CD8-positive, alpha-beta T cell (primary cell): ENCODE measurements at regions of chr17 and their contacts with region 1.

Region 1: GRCh38 chr17:14926526-14927122 is 338.5 kb downstream of the PMP22 start:
- DNase-seq: peak; percentile 13 to 75 (median 56)
- ATAC-seq: no peak
- H3K4me3 ChIP-seq: no peak overlapping the region
- H3K4me3 Mint-ChIP-seq: no peak overlapping the region
- H3K27ac ChIP-seq: no peak overlapping the region
- H3K27ac Mint-ChIP-seq: no peak overlapping the region
- H3K4me1 ChIP-seq: no peaks in the 10 kb centered on the region
- H3K4me1 Mint-ChIP-seq: no peaks in the 10 kb centered on the region
- H3K27me3 ChIP-seq: peaks cover 0 to 3% of the 10 kb centered on the region in 2 experiments
- H3K27me3 Mint-ChIP-seq: peaks cover 14% of the 10 kb centered on the region
- CTCF ChIP-seq: peak; percentile 91

Region 2: GRCh38 chr17:13024526-13025257 is 1901.9 kb before region 1 on chr17:
- CTCF ChIA-PET with region 1: interaction called, 10 read pairs
- POLR2A ChIA-PET with region 1: no interaction called
- intact Hi-C with region 1: loop called in 1 of 2 experiments (anchors 5 kb)
- DNase-seq: peak; percentile 26 to 77 (median 63)
- ATAC-seq: peak; percentile 99
- H3K4me3 ChIP-seq: no peak overlapping the region
- H3K4me3 Mint-ChIP-seq: peak overlapping the region; percentile 27
- H3K27ac ChIP-seq: no peak overlapping the region
- H3K27ac Mint-ChIP-seq: no peak overlapping the region
- H3K4me1 ChIP-seq: peaks cover 7% of the 10 kb centered on the region
- H3K4me1 Mint-ChIP-seq: peaks cover 4% of the 10 kb centered on the region
- H3K27me3 ChIP-seq: no peaks in the 10 kb centered on the region
- H3K27me3 Mint-ChIP-seq: peaks cover 15% of the 10 kb centered on the region
- CTCF ChIP-seq: peak; percentile 97

Region 3: DNA sequence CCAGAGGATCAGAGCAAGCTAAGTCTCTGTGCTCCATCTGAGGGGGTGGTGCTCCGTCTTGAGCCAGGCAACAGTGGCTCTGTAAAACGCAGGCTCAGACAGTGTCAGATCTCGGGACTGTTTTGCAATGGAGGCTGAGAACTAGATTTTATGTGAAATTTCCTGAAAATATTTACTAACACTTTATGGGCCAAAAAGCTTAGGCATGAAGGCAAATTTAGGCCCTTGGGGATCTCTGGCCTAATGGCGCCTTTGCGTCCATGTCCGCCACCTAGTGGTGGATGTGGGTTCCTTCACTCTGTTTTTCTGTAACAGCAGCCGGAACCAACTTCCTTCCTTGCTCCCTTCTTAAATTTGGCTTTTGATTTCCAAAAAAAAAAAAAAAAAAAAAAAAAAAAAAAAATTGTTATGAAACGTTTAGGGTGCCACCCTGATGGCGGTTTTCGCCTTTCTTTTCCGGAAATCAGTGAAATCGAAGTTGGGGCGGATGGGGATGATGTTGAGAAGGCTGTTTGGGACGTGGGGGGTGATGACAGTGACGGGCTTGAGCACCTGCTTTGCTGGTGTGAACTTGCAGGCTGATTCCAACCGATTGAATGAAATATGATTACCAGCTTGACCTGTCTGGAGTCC is 1894.8 kb before region 1 on chr17:
- CTCF ChIA-PET with region 1: interaction called, 10 read pairs
- POLR2A ChIA-PET with region 1: no interaction called
- intact Hi-C with region 1: loop called (anchors 2 to 5 kb)
- DNase-seq: peak; percentile 10 to 72 (median 41)
- ATAC-seq: peak; percentile 81
- H3K4me3 ChIP-seq: no peak overlapping the region
- H3K4me3 Mint-ChIP-seq: no peak overlapping the region
- H3K27ac ChIP-seq: no peak overlapping the region
- H3K27ac Mint-ChIP-seq: peak overlapping the region; percentile 75
- H3K4me1 ChIP-seq: peaks cover 3% of the 10 kb centered on the region
- H3K4me1 Mint-ChIP-seq: peaks cover 16% of the 10 kb centered on the region
- H3K27me3 ChIP-seq: no peaks in the 10 kb centered on the region
- H3K27me3 Mint-ChIP-seq: peaks cover 8% of the 10 kb centered on the region
- CTCF ChIP-seq: peak; percentile 72

Region 4: GRCh38 chr17:13337864-13338371 is 1588.7 kb before region 1 on chr17:
- CTCF ChIA-PET with region 1: interaction called, 8 read pairs
- POLR2A ChIA-PET with region 1: no interaction called
- intact Hi-C with region 1: loop called in 1 of 2 experiments (anchors 1 kb)
- DNase-seq: peak in 2 of 9 experiments; percentile 21 to 40
- ATAC-seq: no peak
- H3K4me3 ChIP-seq: no peak overlapping the region
- H3K4me3 Mint-ChIP-seq: peak overlapping the region; percentile 37
- H3K27ac ChIP-seq: no peak overlapping the region
- H3K27ac Mint-ChIP-seq: no peak overlapping the region
- H3K4me1 ChIP-seq: no peaks in the 10 kb centered on the region
- H3K4me1 Mint-ChIP-seq: peaks cover 4% of the 10 kb centered on the region
- H3K27me3 ChIP-seq: peaks cover 0 to 3% of the 10 kb centered on the region in 2 experiments
- H3K27me3 Mint-ChIP-seq: peaks cover 23% of the 10 kb centered on the region
- CTCF ChIP-seq: peak; percentile 61

Region 5: GRCh38 chr17:13587487-13588338 is 1338.9 kb before region 1 on chr17:
- CTCF ChIA-PET with region 1: interaction called, 105 read pairs
- POLR2A ChIA-PET with region 1: no interaction called
- intact Hi-C with region 1: no loop called
- DNase-seq: no peak
- ATAC-seq: no peak
- H3K4me3 ChIP-seq: no peak overlapping the region
- H3K4me3 Mint-ChIP-seq: no peak overlapping the region
- H3K27ac ChIP-seq: no peak overlapping the region
- H3K27ac Mint-ChIP-seq: no peak overlapping the region
- H3K4me1 ChIP-seq: no peaks in the 10 kb centered on the region
- H3K4me1 Mint-ChIP-seq: no peaks in the 10 kb centered on the region
- H3K27me3 ChIP-seq: no peaks in the 10 kb centered on the region
- H3K27me3 Mint-ChIP-seq: peaks cover 14% of the 10 kb centered on the region
- CTCF ChIP-seq: no peak

Region 6: GRCh38 chr17:14211801-14212200 is 714.8 kb before region 1 on chr17:
- CTCF ChIA-PET with region 1: interaction called, 11 read pairs
- POLR2A ChIA-PET with region 1: no interaction called
- intact Hi-C with region 1: loop called (anchors 1 to 5 kb)
- DNase-seq: peak in 8 of 9 experiments; percentile 40 to 73 (median 60)
- ATAC-seq: peak; percentile 69
- H3K4me3 ChIP-seq: no peak overlapping the region
- H3K4me3 Mint-ChIP-seq: no peak overlapping the region
- H3K27ac ChIP-seq: no peak overlapping the region
- H3K27ac Mint-ChIP-seq: no peak overlapping the region
- H3K4me1 ChIP-seq: peaks cover 9% of the 10 kb centered on the region
- H3K4me1 Mint-ChIP-seq: peaks cover 27% of the 10 kb centered on the region
- H3K27me3 ChIP-seq: no peaks in the 10 kb centered on the region
- H3K27me3 Mint-ChIP-seq: no peaks in the 10 kb centered on the region
- CTCF ChIP-seq: peak; percentile 48

Region 7: DNA sequence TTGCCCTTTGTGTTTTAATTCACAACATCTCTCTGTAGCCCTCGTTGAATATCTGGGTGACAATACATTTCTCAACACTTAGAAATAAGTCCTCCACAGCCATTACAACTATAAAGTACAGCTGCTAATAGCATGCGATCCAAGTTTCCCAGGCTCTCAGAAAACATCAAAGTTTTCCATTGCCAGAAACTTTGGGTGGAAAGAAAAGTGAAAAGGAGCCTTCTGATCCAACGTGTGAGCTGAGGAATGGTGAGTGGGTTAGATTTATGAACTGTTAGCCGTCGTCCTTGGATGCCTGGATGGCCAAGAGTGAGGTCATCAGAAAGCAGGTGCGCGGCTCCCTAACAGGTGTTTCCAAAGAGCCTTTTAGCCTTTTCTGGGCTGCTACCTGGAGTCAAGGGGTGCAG is 80.5 kb after region 1 on chr17:
- CTCF ChIA-PET with region 1: no interaction called
- POLR2A ChIA-PET with region 1: no interaction called
- intact Hi-C with region 1: no loop called
- DNase-seq: no peak
- ATAC-seq: no peak
- H3K4me3 ChIP-seq: no peak overlapping the region
- H3K4me3 Mint-ChIP-seq: no peak overlapping the region
- H3K27ac ChIP-seq: no peak overlapping the region
- H3K27ac Mint-ChIP-seq: no peak overlapping the region
- H3K4me1 ChIP-seq: no peaks in the 10 kb centered on the region
- H3K4me1 Mint-ChIP-seq: no peaks in the 10 kb centered on the region
- H3K27me3 ChIP-seq: no peaks in the 10 kb centered on the region
- H3K27me3 Mint-ChIP-seq: peaks cover 3% of the 10 kb centered on the region
- CTCF ChIP-seq: no peak